ENCODE measurements at regions of chr4 and their contacts with region 1.

Region 1: DNA sequence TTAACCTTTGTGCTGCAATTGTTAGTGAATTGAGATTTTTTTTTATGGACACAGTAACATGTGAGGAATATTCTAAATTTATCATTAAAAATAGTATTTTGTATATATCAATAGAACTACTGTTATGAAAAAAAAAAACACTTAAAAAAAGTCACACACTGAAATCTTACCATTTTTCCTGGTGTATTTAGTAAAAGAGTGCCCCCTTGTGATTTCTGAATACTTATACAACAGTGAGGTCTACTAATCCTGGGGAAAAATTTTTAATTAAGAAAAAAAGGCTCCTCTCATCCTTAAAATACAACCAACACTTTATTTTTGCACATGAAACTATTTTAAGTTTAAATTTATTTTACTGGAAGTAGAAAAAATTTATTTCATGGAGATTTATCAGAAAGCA is 56.4 kb upstream of the SPOCK3 start:
- DNase-seq: no peak
- H3K4me3 ChIP-seq: no peak overlapping the region
- H3K27ac ChIP-seq: no peak overlapping the region
- H3K4me1 ChIP-seq: no peaks in the 10 kb centered on the region
- H3K27me3 ChIP-seq: no peaks in the 10 kb centered on the region
- CTCF ChIP-seq: no peak

Region 2: DNA sequence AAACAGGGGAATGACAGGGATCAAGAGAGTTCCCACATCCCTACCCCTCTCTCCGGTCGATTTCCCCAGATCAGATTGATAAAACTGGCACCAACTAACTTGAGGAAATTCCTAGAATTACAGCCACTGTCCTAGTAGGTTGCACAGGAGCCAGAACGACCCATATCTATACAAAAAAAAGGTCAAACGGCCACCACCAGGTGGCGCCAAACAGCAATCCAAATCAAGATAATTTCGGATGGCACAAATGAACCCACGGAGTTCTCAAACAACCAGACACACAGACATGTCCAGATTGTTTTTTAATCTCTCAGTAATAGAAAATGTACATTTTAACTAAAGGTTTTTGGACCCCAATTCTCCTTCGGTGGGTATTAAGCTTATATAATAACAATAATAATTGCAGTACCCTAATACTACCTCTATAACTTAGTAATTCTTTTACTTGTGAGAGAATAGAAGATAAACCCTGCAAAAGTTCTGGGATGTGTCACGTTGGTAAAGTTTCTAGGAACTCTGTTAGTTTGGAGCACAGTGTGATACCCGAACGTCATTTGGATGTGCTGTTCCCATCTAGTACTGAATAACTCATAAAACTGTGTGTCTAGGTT is 269.0 kb before region 1 on chr4:
- dilution Hi-C with region 1: loop called (anchors 25 kb)
- DNase-seq: no peak
- H3K4me3 ChIP-seq: no peak overlapping the region
- H3K27ac ChIP-seq: no peak overlapping the region
- H3K4me1 ChIP-seq: peaks cover 2% of the 10 kb centered on the region
- H3K27me3 ChIP-seq: no peaks in the 10 kb centered on the region
- CTCF ChIP-seq: peak; percentile 64 to 74 (median 72)

Region 3: GRCh38 chr4:167248271-167248670 is 42.4 kb before region 1 on chr4:
- dilution Hi-C with region 1: no loop called
- DNase-seq: no peak
- H3K4me3 ChIP-seq: no peak overlapping the region
- H3K27ac ChIP-seq: no peak overlapping the region
- H3K4me1 ChIP-seq: no peaks in the 10 kb centered on the region
- H3K27me3 ChIP-seq: no peaks in the 10 kb centered on the region
- CTCF ChIP-seq: no peak